CD8-positive, alpha-beta T cell (primary cell): ENCODE measurements at regions of chr3 and their contacts with region 1.

Region 1: DNA sequence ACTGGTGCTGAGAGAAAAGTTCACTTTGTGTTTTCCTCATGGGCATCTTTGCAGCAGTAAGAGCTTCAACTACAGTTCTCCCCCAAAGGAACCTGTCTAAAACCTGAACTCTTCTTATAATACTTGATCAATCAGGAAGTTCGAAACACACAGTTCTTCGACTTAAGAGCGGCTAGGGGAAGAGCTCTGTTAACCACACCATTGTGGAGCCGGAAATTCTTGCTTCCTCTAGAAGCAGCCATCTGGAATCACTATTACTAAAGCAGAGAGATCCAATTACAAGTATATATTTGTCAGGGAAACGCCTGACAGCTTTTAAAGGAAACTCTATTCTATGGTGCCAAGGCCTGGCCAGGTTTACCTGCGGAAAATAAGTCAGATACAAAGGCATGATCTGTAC is 337.3 kb upstream of the CBLB start:
- DNase-seq: peak in 4 of 9 experiments; percentile 8 to 65 (median 32)
- ATAC-seq: peak; percentile 68
- H3K4me3 ChIP-seq: peak overlapping the region; percentile 1 to 14
- H3K4me3 Mint-ChIP-seq: peak overlapping the region; percentile 76
- H3K27ac ChIP-seq: peak overlapping the region; percentile 11 to 47
- H3K27ac Mint-ChIP-seq: peak overlapping the region; percentile 89
- H3K4me1 ChIP-seq: peaks cover 24% of the 10 kb centered on the region
- H3K4me1 Mint-ChIP-seq: peaks cover 39% of the 10 kb centered on the region
- H3K27me3 ChIP-seq: no peaks in the 10 kb centered on the region
- H3K27me3 Mint-ChIP-seq: no peaks in the 10 kb centered on the region
- CTCF ChIP-seq: no peak

Region 2: DNA sequence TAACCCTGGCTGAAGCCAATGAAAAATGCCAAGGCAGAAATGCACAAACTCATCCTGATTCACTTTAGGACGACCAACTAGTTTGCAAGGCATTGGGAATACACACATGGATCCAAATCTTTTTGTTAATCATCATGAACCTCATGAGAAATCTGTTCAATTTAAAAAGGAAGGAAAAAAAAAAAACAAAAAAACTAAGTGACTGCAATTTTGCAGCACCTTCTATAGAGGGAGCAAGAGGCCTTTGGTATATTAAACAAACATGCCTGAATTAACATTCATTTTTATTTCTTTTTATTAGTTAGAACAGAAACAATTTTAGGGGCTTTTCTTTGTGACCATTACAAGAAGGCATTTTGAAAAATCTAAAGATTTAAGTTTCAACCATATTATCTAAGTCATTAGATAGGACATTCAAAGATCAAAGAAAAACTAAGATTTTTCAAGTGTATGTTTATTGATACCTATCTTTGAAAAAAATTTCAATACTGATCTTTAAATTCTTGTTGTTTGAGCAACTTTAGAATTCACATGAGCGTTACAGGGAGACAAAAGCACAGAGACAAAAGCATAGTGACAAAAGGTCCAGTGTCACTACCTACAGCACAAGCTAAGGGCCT is 519.8 kb before region 1 on chr3:
- CTCF ChIA-PET with region 1: interaction called, 3 read pairs
- POLR2A ChIA-PET with region 1: no interaction called
- intact Hi-C with region 1: loop called (anchors 1 to 2 kb)
- DNase-seq: peak in 2 of 9 experiments; percentile 43 to 63
- ATAC-seq: peak; percentile 66
- H3K4me3 ChIP-seq: no peak overlapping the region
- H3K4me3 Mint-ChIP-seq: no peak overlapping the region
- H3K27ac ChIP-seq: peak overlapping the region in 1 of 2 experiments; percentile 42
- H3K27ac Mint-ChIP-seq: peak overlapping the region; percentile 60
- H3K4me1 ChIP-seq: peaks cover 21% of the 10 kb centered on the region
- H3K4me1 Mint-ChIP-seq: peaks cover 28% of the 10 kb centered on the region
- H3K27me3 ChIP-seq: no peaks in the 10 kb centered on the region
- H3K27me3 Mint-ChIP-seq: no peaks in the 10 kb centered on the region
- CTCF ChIP-seq: peak; percentile 98

Region 3: GRCh38 chr3:105806361-105806760 is 399.8 kb before region 1 on chr3:
- CTCF ChIA-PET with region 1: no interaction called
- POLR2A ChIA-PET with region 1: no interaction called
- intact Hi-C with region 1: loop called in 1 of 2 experiments (anchors 1 kb)
- DNase-seq: peak in 4 of 9 experiments; percentile 25 to 83 (median 58)
- ATAC-seq: peak; percentile 90
- H3K4me3 ChIP-seq: no peak overlapping the region
- H3K4me3 Mint-ChIP-seq: no peak overlapping the region
- H3K27ac ChIP-seq: peak overlapping the region in 1 of 2 experiments; percentile 2
- H3K27ac Mint-ChIP-seq: peak overlapping the region; percentile 60
- H3K4me1 ChIP-seq: peaks cover 23% of the 10 kb centered on the region
- H3K4me1 Mint-ChIP-seq: peaks cover 73% of the 10 kb centered on the region
- H3K27me3 ChIP-seq: no peaks in the 10 kb centered on the region
- H3K27me3 Mint-ChIP-seq: no peaks in the 10 kb centered on the region
- CTCF ChIP-seq: no peak

Region 4: DNA sequence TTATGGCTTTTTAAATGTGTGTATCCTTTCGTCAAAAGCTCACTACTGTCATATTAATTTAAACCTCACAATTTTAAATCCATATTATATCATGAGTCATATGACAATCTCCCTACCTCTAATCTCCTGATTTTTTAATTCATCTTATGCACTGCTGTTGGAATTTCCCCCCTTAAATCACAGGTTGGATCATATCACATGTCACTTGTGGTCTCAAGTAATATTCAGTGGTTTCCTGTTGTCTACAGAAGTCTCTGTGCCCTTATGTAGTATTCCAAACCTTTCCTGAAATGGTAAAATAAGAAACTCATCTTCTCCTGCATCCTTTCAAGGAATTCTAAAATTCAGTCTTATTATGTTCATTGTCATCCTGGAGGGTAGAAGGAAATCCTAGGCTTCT is 221.3 kb before region 1 on chr3:
- CTCF ChIA-PET with region 1: no interaction called
- POLR2A ChIA-PET with region 1: no interaction called
- intact Hi-C with region 1: loop called in 1 of 2 experiments (anchors 5 kb)
- DNase-seq: peak in 2 of 9 experiments; percentile 56 to 63
- ATAC-seq: no peak
- H3K4me3 ChIP-seq: no peak overlapping the region
- H3K4me3 Mint-ChIP-seq: no peak overlapping the region
- H3K27ac ChIP-seq: no peak overlapping the region
- H3K27ac Mint-ChIP-seq: no peak overlapping the region
- H3K4me1 ChIP-seq: peaks cover 7% of the 10 kb centered on the region
- H3K4me1 Mint-ChIP-seq: peaks cover 34% of the 10 kb centered on the region
- H3K27me3 ChIP-seq: no peaks in the 10 kb centered on the region
- H3K27me3 Mint-ChIP-seq: no peaks in the 10 kb centered on the region
- CTCF ChIP-seq: no peak

Region 5: DNA sequence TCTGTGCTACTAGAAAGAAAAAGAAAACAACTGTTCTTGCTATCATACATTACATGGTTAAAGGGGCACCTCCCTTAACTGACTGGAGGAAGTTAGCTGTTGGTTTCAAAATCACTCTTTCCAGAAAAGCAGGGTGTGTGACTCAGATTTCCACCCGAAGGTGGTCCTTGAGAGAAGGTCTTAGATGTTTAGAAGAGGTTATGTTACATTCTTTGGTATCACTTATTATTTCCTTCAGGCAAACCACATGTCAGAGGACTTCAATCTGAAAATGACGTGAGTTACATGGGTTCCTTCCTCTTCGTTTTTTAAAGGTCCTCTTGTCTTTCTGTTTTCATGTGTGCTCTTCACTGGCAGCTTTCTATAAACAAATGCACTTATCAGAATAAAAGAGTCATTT is 29.4 kb before region 1 on chr3:
- CTCF ChIA-PET with region 1: interaction called, 3 read pairs
- POLR2A ChIA-PET with region 1: interaction called, 6 read pairs
- intact Hi-C with region 1: loop called in 1 of 2 experiments (anchors 1 kb)
- DNase-seq: peak; percentile 8 to 86 (median 52)
- ATAC-seq: peak; percentile 95
- H3K4me3 ChIP-seq: peak overlapping the region; percentile 24 to 25
- H3K4me3 Mint-ChIP-seq: peak overlapping the region; percentile 47
- H3K27ac ChIP-seq: peak overlapping the region; percentile 25 to 66
- H3K27ac Mint-ChIP-seq: peak overlapping the region; percentile 75
- H3K4me1 ChIP-seq: peaks cover 50% of the 10 kb centered on the region
- H3K4me1 Mint-ChIP-seq: peaks cover 57% of the 10 kb centered on the region
- H3K27me3 ChIP-seq: no peaks in the 10 kb centered on the region
- H3K27me3 Mint-ChIP-seq: no peaks in the 10 kb centered on the region
- CTCF ChIP-seq: no peak

Region 6: DNA sequence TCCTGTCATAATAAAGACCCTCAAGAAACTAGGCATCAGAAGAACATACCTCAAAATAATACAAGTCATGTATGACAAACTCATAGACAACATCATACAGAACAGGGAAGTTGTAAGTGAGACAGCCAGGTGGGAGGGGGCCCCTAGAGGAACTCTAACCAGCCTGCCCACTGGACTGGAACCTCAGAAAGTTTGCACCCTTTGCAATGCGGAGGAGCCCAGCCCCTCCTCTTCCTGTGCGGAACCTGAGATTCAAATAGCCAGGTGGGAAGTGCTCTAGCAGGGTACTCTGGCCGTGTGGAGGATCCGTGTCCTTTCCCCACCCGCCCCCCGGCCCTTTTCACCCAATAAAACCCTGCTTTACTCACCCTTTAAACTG is 49.7 kb after region 1 on chr3:
- CTCF ChIA-PET with region 1: no interaction called
- POLR2A ChIA-PET with region 1: no interaction called
- intact Hi-C with region 1: no loop called
- DNase-seq: peak in 1 of 9 experiments; percentile 10
- ATAC-seq: no peak
- H3K4me3 ChIP-seq: no peak overlapping the region
- H3K4me3 Mint-ChIP-seq: no peak overlapping the region
- H3K27ac ChIP-seq: no peak overlapping the region
- H3K27ac Mint-ChIP-seq: no peak overlapping the region
- H3K4me1 ChIP-seq: no peaks in the 10 kb centered on the region
- H3K4me1 Mint-ChIP-seq: no peaks in the 10 kb centered on the region
- H3K27me3 ChIP-seq: no peaks in the 10 kb centered on the region
- H3K27me3 Mint-ChIP-seq: no peaks in the 10 kb centered on the region
- CTCF ChIP-seq: no peak

Region 7: GRCh38 chr3:106428565-106428994 is 222.4 kb after region 1 on chr3:
- CTCF ChIA-PET with region 1: no interaction called
- POLR2A ChIA-PET with region 1: no interaction called
- intact Hi-C with region 1: no loop called
- DNase-seq: no peak
- ATAC-seq: no peak
- H3K4me3 ChIP-seq: no peak overlapping the region
- H3K4me3 Mint-ChIP-seq: no peak overlapping the region
- H3K27ac ChIP-seq: no peak overlapping the region
- H3K27ac Mint-ChIP-seq: no peak overlapping the region
- H3K4me1 ChIP-seq: no peaks in the 10 kb centered on the region
- H3K4me1 Mint-ChIP-seq: peaks cover 9% of the 10 kb centered on the region
- H3K27me3 ChIP-seq: no peaks in the 10 kb centered on the region
- H3K27me3 Mint-ChIP-seq: no peaks in the 10 kb centered on the region
- CTCF ChIP-seq: no peak

Region 8: GRCh38 chr3:106609666-106610301 is 403.6 kb after region 1 on chr3:
- CTCF ChIA-PET with region 1: no interaction called
- POLR2A ChIA-PET with region 1: no interaction called
- intact Hi-C with region 1: loop called in 1 of 2 experiments (anchors 5 kb)
- DNase-seq: peak; percentile 37 to 81 (median 56)
- ATAC-seq: peak; percentile 76
- H3K4me3 ChIP-seq: no peak overlapping the region
- H3K4me3 Mint-ChIP-seq: no peak overlapping the region
- H3K27ac ChIP-seq: no peak overlapping the region
- H3K27ac Mint-ChIP-seq: no peak overlapping the region
- H3K4me1 ChIP-seq: no peaks in the 10 kb centered on the region
- H3K4me1 Mint-ChIP-seq: peaks cover 4% of the 10 kb centered on the region
- H3K27me3 ChIP-seq: no peaks in the 10 kb centered on the region
- H3K27me3 Mint-ChIP-seq: no peaks in the 10 kb centered on the region
- CTCF ChIP-seq: peak; percentile 88